OCI-LY7 (cell line): ENCODE measurements at regions of chr3 and their contacts with region 1.

Region 1: GRCh38 chr3:43690400-43691119 is at the start of gene ABHD5:
- DNase-seq: peak; percentile 94
- H3K4me3 ChIP-seq: peak within 1 kb of the TSS; percentile 73
- H3K27ac ChIP-seq: peak within 1 kb of the TSS; percentile 11
- H3K4me1 ChIP-seq: peaks cover 20% of the 10 kb centered on the region
- CTCF ChIP-seq: no peak
- total RNA-seq, gene ABHD5: 6.5 and 7.3 TPM in 2 replicates

Region 2: GRCh38 chr3:43621656-43622432 is 68.7 kb before region 1 on chr3 and contains the start of gene ANO10:
- CTCF ChIA-PET with region 1: no interaction called
- POLR2A ChIA-PET with region 1: interaction called, 4 read pairs
- intact Hi-C with region 1: loop called (anchors 5 kb)
- DNase-seq: peak; percentile 95
- H3K4me3 ChIP-seq: peak within 1 kb of the TSS; percentile 71
- H3K27ac ChIP-seq: no peak within 1 kb of the TSS
- H3K4me1 ChIP-seq: peaks cover 8% of the 10 kb centered on the region
- CTCF ChIP-seq: no peak
- total RNA-seq, gene ANO10: 1.2 and 2.2 TPM in 2 replicates

Region 3: DNA sequence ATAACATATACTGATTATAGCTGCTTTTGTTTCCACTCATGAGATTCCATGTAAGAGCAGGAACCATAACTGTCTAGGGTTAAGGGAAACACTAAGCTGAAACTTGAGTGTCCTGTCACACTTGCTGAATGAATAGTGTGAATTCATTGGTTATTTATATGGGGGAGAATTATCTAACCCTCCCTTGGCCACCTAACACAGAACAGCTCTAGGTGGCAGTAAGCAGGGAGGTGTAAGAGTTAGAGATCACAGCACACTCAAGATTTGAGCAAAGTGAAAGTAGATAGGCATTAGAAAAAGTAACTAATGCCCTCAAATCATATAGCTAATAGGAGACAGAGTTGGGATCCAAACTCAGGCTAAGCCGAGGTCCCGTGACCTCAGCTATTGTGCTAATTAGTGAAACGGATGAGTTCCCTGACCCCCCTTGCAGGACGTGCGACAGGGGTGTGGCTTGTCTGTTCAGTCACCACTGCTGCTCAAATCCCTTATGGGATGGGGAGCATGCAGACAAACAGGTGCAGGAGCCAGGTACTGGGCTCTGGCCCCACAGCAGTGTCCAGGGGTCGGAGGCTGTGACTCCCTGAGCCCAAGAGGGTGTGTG is 41.1 kb before region 1 on chr3:
- CTCF ChIA-PET with region 1: no interaction called
- POLR2A ChIA-PET with region 1: no interaction called
- intact Hi-C with region 1: no loop called
- DNase-seq: no peak
- H3K4me3 ChIP-seq: no peak overlapping the region
- H3K27ac ChIP-seq: no peak overlapping the region
- H3K4me1 ChIP-seq: no peaks in the 10 kb centered on the region
- CTCF ChIP-seq: no peak